HCT116 (cell line): ENCODE measurements at regions of chr1 and their contacts with region 1.

Region 1: DNA sequence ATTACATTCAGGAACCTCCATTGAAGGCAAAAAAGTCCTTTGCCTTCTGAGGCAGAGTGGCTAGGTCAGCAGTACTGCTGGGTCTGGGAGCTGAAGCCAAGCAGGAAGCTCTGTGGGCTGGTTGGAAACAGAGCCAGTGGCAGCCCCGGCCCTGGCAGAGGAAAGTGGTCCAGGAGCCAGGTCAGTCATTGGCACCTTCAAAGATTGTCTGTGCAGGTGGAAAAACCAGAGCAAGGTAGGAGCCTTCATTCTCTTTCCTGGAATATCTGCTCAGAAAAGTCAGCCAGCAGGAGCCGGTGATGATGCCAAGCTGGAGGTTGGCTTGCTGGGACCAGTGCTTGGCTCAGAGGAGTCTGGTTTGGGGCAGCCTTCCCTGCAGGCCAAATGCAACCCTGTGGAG is 12.5 kb upstream of the DISP3 start:
- DNase-seq: no peak
- ATAC-seq: no peak
- H3K4me3 ChIP-seq: no peak overlapping the region
- H3K27ac ChIP-seq: no peak overlapping the region
- H3K4me1 ChIP-seq: no peaks in the 10 kb centered on the region
- H3K27me3 ChIP-seq: peaks cover 80% of the 10 kb centered on the region
- CTCF ChIP-seq: no peak
- POLR2A ChIP-seq: no peak
- RAD21 ChIP-seq: no peak

Region 2: GRCh38 chr1:11550664-11551283 is 84.4 kb after region 1 on chr1:
- CTCF ChIA-PET with region 1: no interaction called
- POLR2A ChIA-PET with region 1: no interaction called
- RAD21 ChIA-PET with region 1: no interaction called
- intact Hi-C with region 1: loop called (anchors 5 kb)
- DNase-seq: peak; percentile 38
- ATAC-seq: peak; percentile 78
- H3K4me3 ChIP-seq: no peak overlapping the region
- H3K27ac ChIP-seq: no peak overlapping the region
- H3K4me1 ChIP-seq: no peaks in the 10 kb centered on the region
- H3K27me3 ChIP-seq: peaks cover 58% of the 10 kb centered on the region
- CTCF ChIP-seq: no peak
- POLR2A ChIP-seq: no peak
- RAD21 ChIP-seq: no peak